Right ventricle myocardium inferior (tissue), 1 donor: ENCODE measurements at regions of chr1 and their contacts with region 1.

Region 1: GRCh38 chr1:111801071-111801841 is 45.6 kb downstream of the DDX20 start:
- DNase-seq: peak; percentile 55
- ATAC-seq: peak; percentile 90

Region 2: DNA sequence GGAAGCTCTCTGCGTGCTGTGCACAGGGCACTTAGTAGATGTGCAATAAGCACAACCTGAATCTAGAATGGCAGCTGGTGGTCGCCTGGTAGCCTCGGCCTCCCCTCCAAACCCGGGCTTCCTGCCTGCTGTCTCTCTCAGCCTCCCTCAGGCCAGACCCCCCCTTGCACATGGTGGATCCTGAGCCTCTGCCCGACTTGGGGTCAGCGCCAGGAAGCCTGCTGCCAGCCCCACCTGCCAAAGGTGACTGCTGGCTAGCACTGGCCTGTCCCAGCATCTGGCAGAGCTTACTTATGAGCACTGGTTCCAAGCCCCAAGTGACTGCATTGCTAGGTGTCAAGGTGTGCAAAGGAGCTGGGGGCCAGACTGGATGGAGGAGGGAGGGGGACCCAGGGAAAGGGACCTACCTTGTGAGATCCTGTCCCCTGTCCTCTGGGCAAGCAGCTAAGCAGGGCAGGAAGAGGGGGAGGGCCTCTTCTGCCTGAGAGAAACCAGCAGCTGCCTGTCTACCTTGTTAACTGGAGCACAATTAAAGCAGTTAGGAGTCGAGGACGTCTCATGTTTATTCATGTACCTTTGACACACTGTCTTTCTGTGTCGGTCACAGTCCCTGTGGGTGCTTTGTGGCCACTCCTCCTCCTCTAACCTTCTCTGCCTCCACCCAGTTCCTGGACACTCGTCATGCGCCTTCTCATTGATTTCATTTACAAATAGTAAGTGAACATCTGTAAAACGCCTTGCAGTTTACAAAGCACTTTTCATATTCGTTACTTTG is 55.3 kb after region 1 on chr1:
- intact Hi-C with region 1: loop called (anchors 2 kb)
- DNase-seq: no peak
- ATAC-seq: peak; percentile 9

Region 3: DNA sequence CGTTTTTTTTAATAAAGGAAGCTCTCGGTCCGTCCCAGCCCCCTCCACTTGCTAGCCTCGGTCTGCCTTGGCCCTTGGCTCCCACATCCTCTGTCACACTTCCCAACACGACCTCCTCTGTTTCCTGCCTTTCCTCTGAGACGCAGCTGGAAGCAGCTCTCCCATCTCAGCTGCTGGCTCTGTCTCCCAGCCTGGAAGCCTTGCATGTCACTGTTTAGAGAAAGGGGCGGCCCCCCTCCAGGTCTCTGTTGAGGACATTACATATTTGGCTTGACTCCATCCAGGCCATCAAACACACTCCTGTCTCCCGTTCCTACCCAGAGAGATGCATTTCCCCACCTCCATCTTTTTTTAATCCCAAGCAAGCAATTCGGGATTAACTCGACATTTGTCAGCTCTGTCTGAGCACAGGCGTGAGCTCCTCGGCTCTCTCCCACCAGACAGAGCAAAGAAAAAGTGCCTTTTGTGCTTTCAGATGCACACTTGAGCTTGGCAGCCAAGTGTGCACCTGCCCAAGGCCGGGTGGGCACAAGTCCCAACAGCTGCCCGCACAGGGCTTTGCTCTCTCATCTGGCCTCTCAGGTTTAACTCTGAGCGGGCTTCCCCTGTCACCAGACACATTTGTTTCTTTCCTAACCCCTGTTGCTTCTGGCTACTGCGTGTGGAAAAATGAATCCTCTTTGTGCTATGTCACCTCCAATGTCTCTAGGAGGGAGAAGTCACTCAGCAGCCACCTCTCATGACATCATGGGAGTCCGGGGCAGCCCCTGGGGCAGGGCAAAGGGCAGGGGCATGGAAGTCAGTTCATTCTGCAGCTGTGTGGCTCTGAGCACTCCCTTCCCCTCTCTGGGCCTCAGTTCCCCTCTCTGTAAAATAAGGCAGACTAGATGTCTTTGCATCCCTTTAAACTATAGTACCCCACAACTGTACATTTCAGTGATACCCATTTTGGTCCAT is 79.9 kb after region 1 on chr1:
- intact Hi-C with region 1: loop called (anchors 5 kb)
- DNase-seq: peak; percentile 69
- ATAC-seq: peak; percentile 56

Region 4: GRCh38 chr1:112058815-112059450 is 257.7 kb after region 1 on chr1:
- intact Hi-C with region 1: loop called (anchors 5 kb)
- DNase-seq: no peak
- ATAC-seq: no peak